PC-9 (cell line): ENCODE measurements at regions of chr13 and their contacts with region 1.

Region 1: DNA sequence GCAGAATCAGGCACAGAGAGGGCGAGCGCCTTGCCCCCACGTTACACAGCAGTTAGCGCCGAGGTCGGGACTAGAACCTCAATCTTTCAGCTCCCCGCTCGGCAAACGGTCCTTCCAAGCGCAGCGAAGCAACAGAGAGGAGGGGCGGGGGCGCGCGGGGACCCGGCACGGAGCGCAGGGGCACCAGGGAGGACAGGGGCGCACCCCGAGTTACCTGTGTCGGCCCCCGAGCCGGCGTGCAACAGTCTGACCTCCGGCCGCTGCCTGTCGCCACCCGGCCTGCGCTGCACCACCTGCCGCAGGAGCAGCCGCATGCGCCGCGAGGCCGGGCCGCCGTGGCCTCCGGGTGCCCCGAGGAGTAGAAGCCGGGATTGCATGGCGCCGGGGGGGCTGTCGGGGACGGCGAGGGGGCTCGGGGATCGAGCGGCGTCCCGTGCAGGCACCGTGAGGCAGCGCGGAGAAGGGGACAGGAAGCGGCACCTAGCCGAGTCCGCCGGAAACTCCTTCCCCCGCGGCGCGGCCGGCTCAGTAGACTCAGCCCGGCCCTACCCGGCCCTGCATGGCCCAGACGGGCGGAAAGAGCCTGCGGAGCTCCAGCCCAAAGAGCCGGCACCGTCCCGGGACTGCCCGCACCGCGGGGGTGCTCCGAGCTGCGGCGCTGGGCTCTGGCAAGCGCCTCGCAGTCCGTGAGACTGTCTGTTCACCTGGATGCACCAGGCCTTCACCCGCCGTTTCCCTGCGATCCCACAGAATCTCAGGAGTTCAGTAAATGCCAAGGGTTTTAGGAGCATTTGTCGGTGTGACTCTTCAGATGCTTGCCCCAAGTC is at the start of gene VWA8:
- DNase-seq: peak in 1 of 2 experiments; percentile 68
- H3K4me3 ChIP-seq: peak within 1 kb of the TSS; percentile 93
- H3K27ac ChIP-seq: peak within 1 kb of the TSS; percentile 48; the same call in 1 of the 2 replicates
- H3K4me1 ChIP-seq: peaks cover 13% of the 10 kb centered on the region
- H3K27me3 ChIP-seq: no peaks in the 10 kb centered on the region
- CTCF ChIP-seq: no peak
- total RNA-seq, gene VWA8: 11.5 and 14.1 TPM in 2 replicates

Region 2: DNA sequence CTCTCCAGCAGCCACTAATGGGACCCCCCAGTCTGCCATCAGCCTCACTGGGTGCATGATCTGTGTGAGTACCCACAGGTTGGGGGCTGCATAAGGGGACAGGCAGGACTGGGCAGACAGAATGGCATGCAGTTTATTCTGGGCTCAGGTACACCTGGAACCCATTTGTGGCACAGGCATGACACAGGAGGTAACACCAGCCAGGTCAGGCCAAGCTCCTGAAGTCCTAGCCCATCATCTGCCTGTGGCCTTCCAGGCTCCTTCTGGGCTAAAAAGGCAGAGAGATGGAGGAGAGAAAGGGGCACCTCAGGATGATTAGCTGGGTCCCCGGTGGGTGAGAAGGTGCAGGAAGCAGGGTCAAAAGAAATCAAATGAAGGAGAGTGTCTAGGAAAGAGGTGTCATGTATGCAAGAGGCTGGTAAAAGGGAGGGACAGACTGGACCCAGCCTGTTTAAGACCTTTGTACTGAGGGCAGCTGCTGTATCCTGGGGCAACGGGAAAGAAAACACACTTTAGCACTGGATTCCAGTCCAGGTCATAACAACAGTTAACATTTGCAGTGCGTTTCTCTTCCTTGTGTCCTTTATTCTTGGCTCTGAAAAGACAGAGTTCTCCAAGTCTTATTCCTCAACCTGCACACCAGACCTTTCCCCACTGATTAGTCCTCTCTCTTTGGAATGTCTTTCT is 67.4 kb after region 1 on chr13:
- CTCF ChIA-PET with region 1: no interaction called
- POLR2A ChIA-PET with region 1: interaction called, 17 read pairs
- intact Hi-C with region 1: loop called (anchors 5 kb)
- DNase-seq: no peak
- H3K4me3 ChIP-seq: no peak overlapping the region
- H3K27ac ChIP-seq: no peak overlapping the region
- H3K4me1 ChIP-seq: peaks cover 21% of the 10 kb centered on the region
- H3K27me3 ChIP-seq: no peaks in the 10 kb centered on the region
- CTCF ChIP-seq: no peak